Transverse colon (tissue), 4 donors: ENCODE measurements at regions of chr19 and their contacts with region 1.

Region 1: GRCh38 chr19:6737284-6738046 is at the start of gene GPR108:
- DNase-seq: peak; percentile 100
- H3K4me3 ChIP-seq: peak within 1 kb of the TSS; percentile 49 to 95 (median 84)
- H3K27ac ChIP-seq: peak within 1 kb of the TSS; percentile 97 to 99 (median 98)
- H3K4me1 ChIP-seq: peaks cover 28 to 47% (median 40%) of the 10 kb centered on the region in 4 donors
- H3K27me3 ChIP-seq: no peaks in the 10 kb centered on the region
- CTCF ChIP-seq: no peak
- EP300 ChIP-seq: no peak
- POLR2A ChIP-seq: peak; percentile 65
- total RNA-seq, gene GPR108: 38.0 to 118 (median 90.6) TPM

Region 2: DNA sequence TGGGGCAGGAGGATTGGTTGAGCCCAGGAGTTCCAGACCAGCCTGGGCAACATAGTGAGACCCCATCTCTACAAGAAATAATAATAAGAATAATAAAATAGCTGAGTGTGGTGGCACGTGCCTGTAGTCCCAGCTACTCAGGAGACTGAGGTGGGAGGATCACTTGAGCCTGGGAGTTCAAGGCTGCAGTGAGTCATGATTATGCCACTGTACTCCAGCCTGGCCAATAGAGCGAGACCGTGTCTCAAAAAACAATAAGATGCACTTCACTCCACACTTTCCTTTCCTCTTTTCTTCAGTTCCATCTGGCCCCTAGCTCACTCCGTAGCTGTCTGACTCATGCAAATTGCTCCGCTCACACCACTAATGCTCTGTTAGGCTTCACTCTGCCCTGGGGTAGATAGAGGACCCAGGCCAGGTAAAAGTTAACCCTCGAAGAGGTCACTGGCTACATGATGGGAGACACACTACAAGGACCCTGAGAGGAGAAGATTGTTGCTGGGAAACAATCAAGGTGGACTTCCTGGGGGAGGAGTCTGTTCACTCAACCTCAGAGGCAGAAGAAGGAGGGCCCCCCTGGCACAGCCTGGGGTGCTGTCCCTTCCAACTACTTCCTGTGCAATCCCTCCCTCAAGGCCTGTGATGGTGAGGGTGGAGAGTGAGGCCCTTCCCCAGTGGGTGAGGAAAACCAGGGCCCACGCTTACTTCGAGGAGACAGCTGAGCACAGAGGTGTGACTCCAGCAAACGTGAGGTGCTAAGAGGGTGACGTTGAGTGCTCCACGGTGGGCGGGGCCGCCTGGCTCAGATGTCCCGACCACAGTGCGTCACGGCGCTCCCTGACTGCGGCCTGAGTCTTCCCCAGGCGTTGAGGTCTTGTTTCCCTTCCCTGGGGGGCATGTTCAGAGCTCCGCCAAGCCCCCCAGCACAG is 215.5 kb before region 1 on chr19:
- in situ Hi-C with region 1: loop called in 1 of 4 experiments (anchors 10 kb)
- intact Hi-C with region 1: no loop called
- DNase-seq: peak; percentile 61
- H3K4me3 ChIP-seq: no peak overlapping the region
- H3K27ac ChIP-seq: no peak overlapping the region
- H3K4me1 ChIP-seq: peaks cover 0 to 2% (median 1%) of the 10 kb centered on the region in 4 donors
- H3K27me3 ChIP-seq: no peaks in the 10 kb centered on the region
- CTCF ChIP-seq: no peak
- EP300 ChIP-seq: no peak
- POLR2A ChIP-seq: no peak

Region 3: DNA sequence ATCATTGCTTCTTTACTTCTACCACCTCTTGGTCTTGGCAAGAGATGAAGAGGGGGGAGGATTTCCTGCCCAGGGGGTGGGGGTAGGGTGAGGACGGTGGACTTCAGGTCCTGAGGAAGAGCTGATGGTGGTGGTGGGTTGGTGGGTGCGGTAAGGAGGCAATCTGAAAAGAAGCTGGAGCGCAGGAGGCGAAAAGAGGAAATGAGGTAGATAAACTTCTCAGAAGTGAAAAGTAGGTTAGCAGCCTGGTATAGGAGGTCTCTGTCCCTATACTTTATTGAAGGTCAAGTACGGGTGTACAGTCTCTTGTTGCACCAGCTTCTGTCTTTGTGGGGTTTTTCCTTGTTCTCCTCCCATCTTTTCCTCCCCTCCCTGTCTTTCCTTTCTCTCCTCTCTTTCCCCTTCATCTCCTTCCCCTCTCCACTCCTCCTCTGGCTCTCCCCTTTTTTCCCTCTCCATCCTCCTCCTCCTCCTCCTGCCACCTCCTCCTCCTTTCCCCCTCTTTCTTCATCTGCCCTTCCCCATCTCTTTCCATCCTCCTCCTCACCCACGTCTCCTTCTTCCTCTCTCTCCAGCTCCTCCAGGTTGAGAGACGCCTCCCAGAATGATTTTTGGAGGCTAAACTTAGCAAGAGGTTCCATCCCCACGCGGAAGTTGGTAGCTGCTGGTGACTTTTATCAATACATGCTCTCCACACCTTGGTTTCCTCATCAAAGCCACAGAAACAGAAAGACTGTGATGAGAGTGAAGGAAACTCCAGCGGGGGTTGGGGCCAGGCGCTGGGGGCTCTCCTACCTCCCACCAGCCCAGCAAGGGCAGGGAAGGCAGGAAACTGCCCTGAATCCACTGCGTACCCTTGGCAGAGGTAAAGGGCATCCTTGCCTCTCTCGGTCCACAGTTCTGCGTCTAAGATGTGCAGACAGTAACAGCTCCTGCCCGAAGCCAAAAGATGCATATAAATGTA is 82.8 kb before region 1 on chr19:
- in situ Hi-C with region 1: no loop called
- intact Hi-C with region 1: no loop called
- DNase-seq: peak; percentile 42
- H3K4me3 ChIP-seq: no peak overlapping the region
- H3K27ac ChIP-seq: peak overlapping the region in 2 of 4 donors; percentile 8 to 12
- H3K4me1 ChIP-seq: no peaks in the 10 kb centered on the region
- H3K27me3 ChIP-seq: peaks cover 48% of the 10 kb centered on the region
- CTCF ChIP-seq: no peak
- EP300 ChIP-seq: no peak
- POLR2A ChIP-seq: no peak

Region 4: GRCh38 chr19:6811906-6812305 is 74.4 kb after region 1 on chr19:
- in situ Hi-C with region 1: no loop called
- intact Hi-C with region 1: no loop called
- DNase-seq: no peak
- H3K4me3 ChIP-seq: no peak overlapping the region
- H3K27ac ChIP-seq: no peak overlapping the region
- H3K4me1 ChIP-seq: no peaks in the 10 kb centered on the region
- H3K27me3 ChIP-seq: no peaks in the 10 kb centered on the region
- CTCF ChIP-seq: no peak
- EP300 ChIP-seq: no peak
- POLR2A ChIP-seq: no peak